Testis (tissue), 5 donors: ENCODE measurements at regions of chr19 and their contacts with region 1.

Region 1: DNA sequence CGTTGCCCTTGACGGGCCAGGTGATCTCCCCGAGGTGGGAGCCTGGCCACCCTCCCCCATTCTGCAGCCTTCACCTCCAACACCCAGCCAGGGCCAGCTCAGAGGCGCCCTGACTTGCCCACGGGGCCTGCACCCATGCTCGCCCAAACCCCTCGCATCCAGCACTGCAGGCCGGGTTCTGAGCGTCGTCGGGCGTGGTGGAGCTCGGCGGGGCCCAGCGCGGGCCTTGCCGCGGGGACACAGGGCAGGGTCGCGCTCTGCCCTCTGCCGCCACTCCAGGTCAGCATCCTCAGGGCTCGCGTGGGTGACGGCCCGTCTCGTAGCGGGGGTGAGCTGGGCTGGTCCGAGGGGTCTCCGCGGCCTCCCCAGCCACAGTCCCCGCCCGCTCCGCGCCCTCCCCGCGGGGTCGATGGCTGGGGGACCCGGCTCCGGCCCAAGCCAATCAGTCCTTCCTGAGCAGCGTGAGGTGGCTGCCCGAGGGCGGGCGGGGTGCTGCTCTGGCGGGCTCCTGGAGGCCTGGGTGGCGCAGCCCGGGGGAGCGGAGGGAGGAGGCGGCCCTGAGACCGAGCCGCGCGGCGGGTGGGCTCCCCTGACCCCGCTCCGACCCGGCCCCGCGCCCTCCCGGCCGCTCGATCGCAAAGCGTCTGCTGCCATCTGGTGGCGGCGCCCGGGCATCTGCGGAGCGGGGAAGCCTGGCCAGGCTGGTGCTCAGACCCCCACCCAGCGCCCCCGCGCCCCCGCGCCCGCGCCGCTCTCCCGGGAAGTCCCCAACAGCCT is 61.4 kb downstream of the CCNE1 start:
- DNase-seq: peak; percentile 61
- H3K4me3 ChIP-seq: peak overlapping the region; percentile 31 to 52
- H3K27ac ChIP-seq: no peak overlapping the region
- H3K4me1 ChIP-seq: peaks cover 13% of the 10 kb centered on the region
- H3K27me3 ChIP-seq: no peaks in the 10 kb centered on the region
- CTCF ChIP-seq: peak; percentile 47 to 92 (median 79)
- POLR2A ChIP-seq: no peak

Region 2: DNA sequence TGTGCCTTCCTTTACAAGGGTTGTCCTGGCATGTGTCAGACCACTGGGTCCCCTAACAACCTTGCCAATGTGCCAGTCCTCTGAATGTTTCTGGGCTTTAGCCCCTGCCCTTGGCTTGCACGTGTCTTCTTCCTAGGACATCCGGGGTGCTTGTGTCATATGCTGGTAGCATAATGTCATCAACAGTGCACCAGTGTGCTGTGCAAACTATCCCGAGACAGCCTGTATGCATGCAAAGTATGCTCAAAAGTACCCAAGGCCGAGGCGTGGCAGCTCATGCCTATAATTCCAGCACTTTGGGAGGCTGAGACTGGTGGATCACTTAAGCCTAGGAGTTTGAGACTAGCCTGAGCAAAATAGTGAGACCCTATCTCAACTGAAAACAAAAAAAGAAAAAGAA is 137.4 kb before region 1 on chr19:
- intact Hi-C with region 1: loop called (anchors 10 kb)
- DNase-seq: no peak
- H3K4me3 ChIP-seq: no peak overlapping the region
- H3K27ac ChIP-seq: no peak overlapping the region
- H3K4me1 ChIP-seq: no peaks in the 10 kb centered on the region
- H3K27me3 ChIP-seq: no peaks in the 10 kb centered on the region
- CTCF ChIP-seq: no peak
- POLR2A ChIP-seq: no peak

Region 3: GRCh38 chr19:29771708-29772414 is 101.4 kb before region 1 on chr19:
- intact Hi-C with region 1: loop called (anchors 5 kb)
- DNase-seq: peak; percentile 54
- H3K4me3 ChIP-seq: no peak overlapping the region
- H3K27ac ChIP-seq: no peak overlapping the region
- H3K4me1 ChIP-seq: peaks cover 7% of the 10 kb centered on the region
- H3K27me3 ChIP-seq: no peaks in the 10 kb centered on the region
- CTCF ChIP-seq: peak; percentile 24 to 59 (median 48)
- POLR2A ChIP-seq: no peak

Region 4: GRCh38 chr19:29927944-29928625 is 54.9 kb after region 1 on chr19:
- intact Hi-C with region 1: no loop called
- DNase-seq: no peak
- H3K4me3 ChIP-seq: no peak overlapping the region
- H3K27ac ChIP-seq: no peak overlapping the region
- H3K4me1 ChIP-seq: no peaks in the 10 kb centered on the region
- H3K27me3 ChIP-seq: no peaks in the 10 kb centered on the region
- CTCF ChIP-seq: no peak
- POLR2A ChIP-seq: no peak

Region 5: GRCh38 chr19:30074741-30075715 is 201.8 kb after region 1 on chr19:
- intact Hi-C with region 1: no loop called
- DNase-seq: no peak
- H3K4me3 ChIP-seq: no peak overlapping the region
- H3K27ac ChIP-seq: no peak overlapping the region
- H3K4me1 ChIP-seq: no peaks in the 10 kb centered on the region
- H3K27me3 ChIP-seq: no peaks in the 10 kb centered on the region
- CTCF ChIP-seq: no peak
- POLR2A ChIP-seq: no peak